Motor neuron (in vitro differentiated cells): ENCODE measurements at regions of chr10 and their contacts with region 1.

Region 1: DNA sequence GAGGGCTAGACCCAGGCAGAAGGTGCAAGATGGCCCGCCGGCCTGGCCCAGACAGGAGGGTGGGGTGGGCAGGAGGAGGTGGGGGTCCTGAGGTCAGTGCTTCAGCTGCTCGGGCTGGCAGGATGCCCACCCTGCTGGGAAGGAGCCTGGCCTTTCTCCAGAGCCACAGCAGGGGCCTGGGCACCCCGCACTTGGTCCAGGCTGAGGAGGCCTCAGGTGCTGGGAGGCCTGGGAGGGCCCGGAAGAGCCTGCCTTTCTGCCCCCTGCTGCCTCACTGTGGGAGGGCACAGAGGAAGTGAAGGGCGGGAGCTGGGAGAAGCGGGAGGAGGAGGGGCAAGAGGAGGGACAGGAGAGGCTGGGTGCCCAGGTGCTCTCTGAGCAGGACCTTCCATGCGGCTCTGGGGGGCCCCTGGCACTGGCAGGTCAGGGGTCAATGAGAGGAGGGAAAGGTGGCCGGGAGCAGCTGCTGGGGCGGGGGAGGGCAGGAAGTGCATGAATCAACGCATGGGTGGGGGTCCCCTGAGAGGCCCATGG is 49.7 kb downstream of the PWWP2B start:
- ATAC-seq: peak; percentile 18 to 80 (median 56)
- H3K4me3 ChIP-seq: no peak overlapping the region
- H3K27ac ChIP-seq: peak overlapping the region; percentile 24 to 76
- H3K4me1 ChIP-seq: peaks cover 50 to 66% of the 10 kb centered on the region in 2 donors

Region 2: DNA sequence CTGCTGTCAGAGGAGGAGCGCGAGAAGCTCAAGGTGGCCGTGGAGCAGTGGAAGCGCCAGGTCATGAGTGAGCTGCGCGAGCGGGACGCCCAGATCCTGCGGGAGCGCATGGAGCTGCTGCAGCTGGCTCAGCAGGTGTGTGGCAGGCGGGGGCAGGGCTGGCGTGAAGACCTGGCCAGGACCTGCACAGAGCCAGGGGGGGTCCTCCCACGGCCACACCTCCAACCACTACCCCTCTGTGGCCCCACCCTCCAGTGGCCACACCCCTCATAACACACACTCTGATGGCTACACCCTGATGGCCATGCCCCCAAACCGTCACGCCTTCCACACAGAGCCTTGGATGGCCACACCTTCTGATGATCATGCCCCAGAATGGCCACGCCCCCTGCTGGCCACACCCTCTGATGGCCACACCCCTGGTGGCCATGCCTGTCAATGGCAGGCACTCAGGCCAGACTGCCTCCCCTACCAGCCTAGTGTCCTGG is 283.4 kb before region 1 on chr10:
- in situ Hi-C with region 1: no loop called
- ATAC-seq: peak; percentile 64 to 81 (median 72)
- H3K4me3 ChIP-seq: no peak overlapping the region
- H3K27ac ChIP-seq: peak overlapping the region in 1 of 2 donors; percentile 43
- H3K4me1 ChIP-seq: peaks cover 28 to 35% of the 10 kb centered on the region in 2 donors

Region 3: GRCh38 chr10:132396495-132397035 is 50.2 kb before region 1 on chr10:
- in situ Hi-C with region 1: loop called in 1 of 9 experiments (anchors 10 kb)
- ATAC-seq: peak; percentile 34 to 79 (median 68)
- H3K4me3 ChIP-seq: peak overlapping the region; percentile 52 to 92 (median 74)
- H3K27ac ChIP-seq: peak overlapping the region; percentile 73 to 92
- H3K4me1 ChIP-seq: peaks cover 23 to 26% of the 10 kb centered on the region in 2 donors

Region 4: DNA sequence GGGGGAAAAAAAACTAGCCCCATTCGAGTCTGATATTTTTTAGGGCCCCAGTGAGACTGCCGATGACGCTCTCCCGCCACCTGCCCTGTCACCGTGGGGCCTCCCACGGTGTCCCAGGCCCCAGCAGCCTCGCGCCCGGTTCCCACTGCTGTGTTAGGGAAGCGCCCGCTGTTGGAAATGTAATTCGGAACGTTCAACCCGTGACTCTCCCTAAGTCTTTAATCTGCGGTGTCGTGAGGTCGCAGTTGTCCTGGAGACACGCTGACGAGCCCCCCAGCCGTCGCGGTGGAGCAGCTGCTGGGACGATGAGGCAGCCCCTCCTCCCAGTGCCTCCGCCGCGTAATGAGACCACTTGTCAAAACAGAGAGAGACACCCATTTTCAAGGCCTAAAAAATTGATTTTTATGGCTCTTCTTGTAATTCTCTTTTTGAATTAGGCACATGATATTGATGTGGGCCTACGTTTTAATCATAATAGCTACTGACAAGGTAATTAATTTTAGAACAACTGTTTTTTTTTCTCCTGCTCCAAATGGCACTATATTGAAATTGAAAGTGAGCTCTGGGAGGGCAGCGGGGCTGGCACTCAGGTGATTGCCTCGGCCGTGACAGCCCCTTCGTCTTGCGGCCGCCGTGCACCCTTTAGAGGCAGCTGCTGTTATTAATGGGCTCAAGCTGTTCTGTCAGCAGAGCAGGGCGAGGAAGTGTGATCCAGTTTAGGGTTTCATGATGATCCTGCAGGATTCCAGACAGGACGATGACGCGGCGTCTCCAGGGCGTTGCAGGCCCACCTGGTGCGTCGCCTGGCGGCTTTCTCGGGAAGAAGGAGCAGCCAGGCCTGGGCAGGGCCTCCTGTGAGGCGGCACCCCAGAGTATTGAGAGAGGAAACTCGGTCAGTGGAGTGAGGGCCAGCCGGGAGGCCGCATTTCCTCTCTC is 275.9 kb after region 1 on chr10:
- in situ Hi-C with region 1: no loop called
- ATAC-seq: peak in 5 of 8 experiments; percentile 86 to 89 (median 87)
- H3K4me3 ChIP-seq: no peak overlapping the region
- H3K27ac ChIP-seq: peak overlapping the region; percentile 9 to 34
- H3K4me1 ChIP-seq: peaks cover 19 to 20% of the 10 kb centered on the region in 2 donors